Activated CD4-positive, alpha-beta T cell treated with anti-CD3 and anti-CD28 coated beads for 36 hours (primary cell): ENCODE measurements at regions of chr19 and their contacts with region 1.

Region 1: GRCh38 chr19:55385740-55386529 is at the start of gene RPL28:
- DNase-seq: peak; percentile 98
- ATAC-seq: peak; percentile 85
- H3K4me3 Mint-ChIP-seq: peak within 1 kb of the TSS; percentile 89
- H3K27ac Mint-ChIP-seq: peak within 1 kb of the TSS; percentile 98
- H3K4me1 Mint-ChIP-seq: peaks cover 51% of the 10 kb centered on the region
- H3K27me3 Mint-ChIP-seq: no peaks in the 10 kb centered on the region
- total RNA-seq, gene RPL28: 2,751 to 4,078 TPM

Region 2: DNA sequence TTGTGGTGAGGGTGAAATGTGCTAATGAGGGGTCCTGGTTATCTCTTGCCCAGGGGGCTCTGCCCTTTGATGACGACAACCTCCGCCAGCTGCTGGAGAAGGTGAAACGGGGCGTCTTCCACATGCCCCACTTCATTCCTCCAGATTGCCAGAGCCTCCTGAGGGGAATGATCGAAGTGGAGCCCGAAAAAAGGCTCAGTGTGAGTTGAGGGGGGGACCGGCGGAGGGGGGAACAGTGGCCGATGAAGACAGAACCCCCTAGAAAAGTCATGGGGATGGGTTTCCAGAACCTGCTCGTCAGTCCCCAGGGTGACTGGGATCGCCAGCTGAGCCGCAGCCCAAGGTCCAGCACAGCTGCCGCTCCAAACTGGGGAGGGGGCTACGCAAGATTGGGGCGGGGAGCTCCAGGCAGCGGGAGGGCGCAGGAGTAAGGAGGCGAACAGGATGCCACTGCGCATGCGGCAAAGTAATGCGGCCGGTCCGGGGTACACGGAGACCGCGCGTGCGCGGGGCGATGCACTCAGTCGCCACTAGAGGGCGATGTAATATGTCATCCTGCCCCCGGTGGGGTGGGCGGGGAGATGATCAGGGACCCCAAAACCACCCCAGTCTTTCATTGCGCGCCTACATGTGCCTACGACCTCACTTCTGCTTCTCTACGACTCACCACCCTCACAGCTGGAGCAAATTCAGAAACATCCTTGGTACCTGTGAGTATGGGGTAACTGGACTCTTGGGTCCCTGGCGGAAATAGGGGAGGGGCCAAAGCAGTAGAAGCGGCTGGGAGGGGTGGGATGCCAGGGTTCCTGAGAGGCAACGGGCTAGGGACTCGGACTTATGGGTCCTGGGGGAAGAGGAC is 84.2 kb before region 1 on chr19:
- CTCF ChIA-PET with region 1: interaction called, 3 read pairs
- POLR2A ChIA-PET with region 1: no interaction called
- intact Hi-C with region 1: loop called (anchors 1 to 5 kb)
- DNase-seq: peak; percentile 97
- ATAC-seq: peak; percentile 90
- H3K4me3 Mint-ChIP-seq: peak overlapping the region; percentile 81
- H3K27ac Mint-ChIP-seq: peak overlapping the region; percentile 90
- H3K4me1 Mint-ChIP-seq: peaks cover 6% of the 10 kb centered on the region
- H3K27me3 Mint-ChIP-seq: no peaks in the 10 kb centered on the region

Region 3: GRCh38 chr19:55484593-55485438 is 98.9 kb after region 1 on chr19 and contains the start of gene NAT14:
- CTCF ChIA-PET with region 1: no interaction called
- POLR2A ChIA-PET with region 1: no interaction called
- intact Hi-C with region 1: loop called in 1 of 2 experiments (anchors 1 kb)
- DNase-seq: peak; percentile 75
- ATAC-seq: peak; percentile 74
- H3K4me3 Mint-ChIP-seq: peak within 1 kb of the TSS; percentile 75
- H3K27ac Mint-ChIP-seq: peak within 1 kb of the TSS; percentile 78
- H3K4me1 Mint-ChIP-seq: peaks cover 21% of the 10 kb centered on the region
- H3K27me3 Mint-ChIP-seq: no peaks in the 10 kb centered on the region
- total RNA-seq, gene NAT14: 8.2 to 14.8 TPM

Region 4: GRCh38 chr19:55580628-55581144 is 194.8 kb after region 1 on chr19 and contains the start of gene ZNF579:
- CTCF ChIA-PET with region 1: no interaction called
- POLR2A ChIA-PET with region 1: no interaction called
- intact Hi-C with region 1: loop called in 1 of 2 experiments (anchors 1 kb)
- DNase-seq: peak; percentile 89
- ATAC-seq: peak; percentile 79
- H3K4me3 Mint-ChIP-seq: peak within 1 kb of the TSS; percentile 83
- H3K27ac Mint-ChIP-seq: peak within 1 kb of the TSS; percentile 78
- H3K4me1 Mint-ChIP-seq: peaks cover 23% of the 10 kb centered on the region
- H3K27me3 Mint-ChIP-seq: no peaks in the 10 kb centered on the region
- total RNA-seq, gene ZNF579: 7.2 to 7.5 TPM

Region 5: GRCh38 chr19:55674841-55675660 is 289.1 kb after region 1 on chr19 and contains the start of gene EPN1:
- CTCF ChIA-PET with region 1: no interaction called
- POLR2A ChIA-PET with region 1: no interaction called
- intact Hi-C with region 1: loop called in 1 of 2 experiments (anchors 1 kb)
- DNase-seq: peak; percentile 99
- ATAC-seq: peak; percentile 91
- H3K4me3 Mint-ChIP-seq: peak within 1 kb of the TSS; percentile 95
- H3K27ac Mint-ChIP-seq: peak within 1 kb of the TSS; percentile 96
- H3K4me1 Mint-ChIP-seq: peaks cover 63% of the 10 kb centered on the region
- H3K27me3 Mint-ChIP-seq: no peaks in the 10 kb centered on the region
- total RNA-seq, gene EPN1: 32.5 to 37.1 TPM